ENCODE measurements at regions of chr19 and their contacts with region 1.

Region 1: GRCh38 chr19:17530586-17530985 is 19.1 kb downstream of the PGLS start:
- DNase-seq: no peak
- ATAC-seq: no peak
- H3K4me3 Mint-ChIP-seq: peak overlapping the region; percentile 90
- H3K27ac Mint-ChIP-seq: peak overlapping the region; percentile 94
- H3K4me1 Mint-ChIP-seq: peaks cover 60% of the 10 kb centered on the region
- H3K27me3 Mint-ChIP-seq: no peaks in the 10 kb centered on the region
- CTCF ChIP-seq: no peak

Region 2: GRCh38 chr19:17475541-17476115 is 55.0 kb before region 1 on chr19:
- CTCF ChIA-PET with region 1: no interaction called
- POLR2A ChIA-PET with region 1: interaction called, 12 read pairs
- intact Hi-C with region 1: no loop called
- DNase-seq: no peak
- ATAC-seq: no peak
- H3K4me3 Mint-ChIP-seq: no peak overlapping the region
- H3K27ac Mint-ChIP-seq: no peak overlapping the region
- H3K4me1 Mint-ChIP-seq: peaks cover 9% of the 10 kb centered on the region
- H3K27me3 Mint-ChIP-seq: no peaks in the 10 kb centered on the region
- CTCF ChIP-seq: no peak

Region 3: DNA sequence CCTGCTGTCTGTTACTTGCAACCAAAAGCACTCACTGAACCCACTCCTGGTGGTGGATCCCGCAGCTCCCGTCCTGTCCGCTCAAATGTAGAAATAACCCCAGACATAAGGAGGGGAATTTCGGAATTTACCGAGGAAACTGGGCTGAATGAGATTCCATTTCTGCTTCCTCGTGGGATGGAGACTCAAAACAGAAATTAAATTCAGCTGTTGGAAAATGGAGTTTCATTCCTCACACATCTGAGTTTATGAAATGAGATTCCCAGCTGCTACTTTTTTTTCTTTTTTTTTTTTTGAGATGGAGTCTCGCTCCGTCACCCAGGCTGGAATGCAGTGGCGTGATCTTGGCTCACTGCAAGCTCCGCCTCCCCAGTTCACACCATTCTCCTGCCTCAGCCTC is 69.2 kb after region 1 on chr19:
- CTCF ChIA-PET with region 1: no interaction called
- POLR2A ChIA-PET with region 1: no interaction called
- intact Hi-C with region 1: no loop called
- DNase-seq: no peak
- ATAC-seq: no peak
- H3K4me3 Mint-ChIP-seq: no peak overlapping the region
- H3K27ac Mint-ChIP-seq: no peak overlapping the region
- H3K4me1 Mint-ChIP-seq: peaks cover 10% of the 10 kb centered on the region
- H3K27me3 Mint-ChIP-seq: peaks cover 30% of the 10 kb centered on the region
- CTCF ChIP-seq: no peak

Measured in activated B cell treated with CpG ODN at 0.5 μM for 24 hours (primary cell).